Ovary (tissue), 10 donors: ENCODE measurements at regions of chr17 and their contacts with region 1.

Region 1: GRCh38 chr17:20315821-20316220 is 151.5 kb downstream of the LGALS9B start:
- DNase-seq: no peak
- H3K4me3 ChIP-seq: no peak overlapping the region
- H3K27ac ChIP-seq: no peak overlapping the region
- H3K4me1 ChIP-seq: peaks cover 3% of the 10 kb centered on the region
- H3K27me3 ChIP-seq: no peaks in the 10 kb centered on the region
- CTCF ChIP-seq: no peak
- EP300 ChIP-seq: no peak
- POLR2A ChIP-seq: no peak

Region 2: GRCh38 chr17:20009302-20010098 is 306.3 kb before region 1 on chr17 and contains the start of gene SPECC1:
- intact Hi-C with region 1: loop called in 2 of 4 experiments (anchors 5 to 10 kb)
- DNase-seq: peak; percentile 84 to 95 (median 90)
- H3K4me3 ChIP-seq: peak within 1 kb of the TSS; percentile 76
- H3K27ac ChIP-seq: peak within 1 kb of the TSS; percentile 72 to 76
- H3K4me1 ChIP-seq: no peaks in the 10 kb centered on the region
- H3K27me3 ChIP-seq: no peaks in the 10 kb centered on the region
- CTCF ChIP-seq: peak in 2 of 3 donors; percentile 99
- EP300 ChIP-seq: no peak
- POLR2A ChIP-seq: no peak
- total RNA-seq, gene SPECC1: 34.7 to 86.5 (median 68.7) TPM

Region 3: DNA sequence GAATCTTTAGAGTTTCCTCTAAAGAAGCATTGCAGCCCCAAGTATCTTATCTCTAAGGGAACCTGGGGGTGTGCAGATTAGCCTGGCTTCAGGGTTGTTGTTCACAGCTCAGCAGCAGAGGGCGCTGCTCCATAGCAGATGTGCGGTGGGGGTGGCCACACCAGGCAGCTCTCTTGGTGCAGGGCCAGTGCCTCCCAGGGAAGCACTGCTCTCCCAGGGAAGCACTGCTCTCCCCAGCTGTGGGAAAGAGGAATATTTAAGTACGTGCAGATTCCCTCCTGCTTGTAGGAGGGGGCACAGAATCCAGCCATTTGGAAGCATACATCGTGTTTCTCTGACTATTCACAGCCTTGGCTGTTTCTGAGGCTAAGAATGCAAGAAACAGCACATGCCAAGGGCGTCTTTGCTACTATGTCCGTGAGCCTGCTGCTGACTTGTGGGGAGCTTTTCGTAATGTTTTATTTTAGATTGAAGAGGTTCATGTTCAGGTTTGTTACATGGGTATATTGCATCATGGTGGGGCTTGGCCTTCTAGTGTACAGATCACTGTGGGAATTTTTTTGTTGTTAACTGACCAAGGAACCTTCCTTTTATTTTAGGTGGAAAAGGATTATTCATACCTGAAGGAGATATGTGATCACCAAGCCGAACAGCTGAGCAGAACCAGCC is 88.9 kb before region 1 on chr17:
- intact Hi-C with region 1: loop called (anchors 5 to 10 kb)
- DNase-seq: peak; percentile 88 to 93 (median 89)
- H3K4me3 ChIP-seq: no peak overlapping the region
- H3K27ac ChIP-seq: no peak overlapping the region
- H3K4me1 ChIP-seq: peaks cover 3% of the 10 kb centered on the region
- H3K27me3 ChIP-seq: no peaks in the 10 kb centered on the region
- CTCF ChIP-seq: peak; percentile 76 to 89 (median 80)
- EP300 ChIP-seq: no peak
- POLR2A ChIP-seq: no peak

Region 4: DNA sequence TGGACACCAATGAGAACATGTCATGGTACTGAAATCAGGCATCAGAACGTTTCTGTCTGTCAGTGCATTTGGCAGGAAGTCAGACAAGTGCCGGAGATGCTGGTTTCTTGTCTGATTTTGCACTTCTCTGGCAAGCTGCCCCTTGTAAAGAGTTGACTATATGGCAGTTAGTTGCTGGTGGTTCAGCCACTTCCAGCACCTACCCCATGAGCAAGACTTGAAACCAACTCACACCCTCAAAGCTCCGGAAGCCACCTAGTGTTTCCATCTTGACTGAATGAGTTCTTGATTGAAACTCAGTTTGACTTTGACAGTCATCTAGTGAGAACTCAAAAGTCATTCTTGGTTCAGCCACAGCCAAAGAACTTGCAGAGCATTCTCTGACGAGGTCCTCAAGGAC is 81.5 kb before region 1 on chr17:
- intact Hi-C with region 1: loop called (anchors 5 to 10 kb)
- DNase-seq: no peak
- H3K4me3 ChIP-seq: no peak overlapping the region
- H3K27ac ChIP-seq: no peak overlapping the region
- H3K4me1 ChIP-seq: peaks cover 3% of the 10 kb centered on the region
- H3K27me3 ChIP-seq: no peaks in the 10 kb centered on the region
- CTCF ChIP-seq: no peak
- EP300 ChIP-seq: no peak
- POLR2A ChIP-seq: no peak